ENCODE measurements at regions of chr14 and their contacts with region 1.

Region 1: DNA sequence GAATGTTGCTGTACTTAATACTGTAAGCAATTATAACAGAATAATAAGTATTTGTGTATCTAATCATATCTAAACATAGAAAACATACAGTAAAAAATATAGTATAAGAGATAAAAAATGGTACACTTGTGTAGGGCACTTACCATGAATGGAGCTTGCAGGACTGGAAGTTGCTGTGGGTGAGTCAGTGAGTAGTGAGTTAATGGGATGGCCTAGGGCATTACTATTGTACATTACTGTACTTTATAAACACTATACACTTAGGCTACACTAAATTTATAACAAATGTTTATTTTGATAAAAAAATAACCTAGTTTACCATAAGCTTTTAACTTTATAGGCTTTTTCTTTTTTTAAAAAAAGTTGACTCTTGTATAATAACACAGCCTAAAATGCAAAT is 1071.2 kb upstream of the SEL1L start:
- DNase-seq: no peak

Region 2: DNA sequence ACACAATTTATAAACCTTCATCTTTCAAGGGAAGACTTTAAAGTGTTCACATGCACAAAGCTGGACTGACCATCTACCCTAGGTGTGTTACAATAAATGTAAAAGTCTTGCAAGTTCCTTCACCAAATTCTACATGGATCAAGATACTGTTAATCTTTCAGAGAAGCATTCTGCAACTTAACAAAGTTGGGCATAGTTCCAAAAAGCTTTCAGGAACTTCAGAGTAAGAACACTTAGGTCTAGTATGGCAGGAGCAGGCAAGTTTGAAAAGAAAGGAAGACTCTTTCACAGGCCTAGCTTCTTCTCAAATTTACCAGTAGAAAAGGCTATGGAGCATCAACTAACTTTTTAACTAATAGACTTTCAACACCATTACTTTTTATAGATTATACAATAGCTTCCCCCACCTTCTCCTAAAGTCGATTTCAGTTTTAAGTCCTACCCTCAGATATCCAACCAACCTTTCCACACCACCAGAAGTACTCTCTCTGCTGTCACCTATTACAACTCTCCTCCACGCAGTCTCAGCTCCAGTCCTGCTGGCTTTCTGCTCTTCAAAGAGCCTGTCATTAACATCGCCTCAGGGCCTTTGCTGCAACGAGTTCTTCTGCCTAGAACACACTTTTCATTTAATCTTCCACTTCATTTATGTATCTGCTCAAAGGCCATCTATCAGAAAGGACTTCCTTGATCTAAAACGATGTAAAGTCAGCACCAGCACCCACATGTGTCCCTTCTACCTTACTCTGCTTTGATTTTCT is 1997.2 kb before region 1 on chr14:
- intact Hi-C with region 1: loop called in 1 of 2 experiments (anchors 10 kb)
- DNase-seq: no peak

Region 3: GRCh38 chr14:82546401-82546800 is 58.4 kb before region 1 on chr14:
- intact Hi-C with region 1: loop called in 1 of 2 experiments (anchors 2 kb)
- DNase-seq: no peak

Region 4: DNA sequence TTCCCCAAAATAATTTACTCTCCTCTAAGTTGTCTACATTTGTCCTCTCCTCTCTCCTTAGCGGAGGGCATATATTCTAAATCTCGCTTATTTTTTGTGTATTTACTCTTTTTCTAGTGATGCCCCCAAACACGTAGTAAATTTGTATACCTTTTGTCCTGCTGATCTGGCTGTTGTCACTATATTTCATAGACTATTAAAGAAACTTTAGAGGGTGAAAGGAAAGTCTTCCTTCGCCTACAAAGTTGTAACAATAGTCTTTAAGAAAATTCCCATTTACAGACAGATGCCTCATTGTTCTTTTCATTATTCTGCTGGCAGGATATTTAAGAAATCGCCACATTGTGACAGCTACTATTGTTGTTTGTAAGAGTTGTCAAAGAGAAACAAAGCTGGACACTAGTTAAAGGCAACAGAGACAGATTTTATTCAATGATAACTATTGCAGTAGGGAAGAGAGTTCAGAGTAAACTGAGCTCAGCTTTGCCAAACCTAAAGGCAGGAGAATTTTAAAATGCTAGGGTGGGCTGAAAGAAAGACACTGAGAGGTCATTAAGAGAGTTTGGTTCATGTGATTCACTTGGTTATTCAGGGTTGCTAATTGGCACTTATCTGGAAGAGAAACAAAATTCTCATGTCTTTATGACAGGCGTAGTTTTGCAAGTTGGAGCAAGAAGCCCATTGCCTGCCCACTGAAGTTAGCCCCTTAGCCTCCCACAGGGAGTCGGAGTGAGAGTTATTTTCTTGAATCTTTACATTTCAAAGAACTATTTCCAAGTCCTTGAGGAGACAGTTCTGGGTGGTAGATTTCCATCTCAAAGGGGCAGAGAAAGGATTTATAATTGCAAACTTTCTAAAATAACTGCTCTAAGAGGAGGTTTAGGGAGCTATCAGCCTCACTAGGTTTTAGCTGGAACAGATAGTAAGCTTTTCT is 201.3 kb after region 1 on chr14:
- intact Hi-C with region 1: no loop called
- DNase-seq: no peak